Activated naive CD4-positive, alpha-beta T cell treated with anti-CD3 and anti-CD28 coated beads for 36 hours (primary cell): ENCODE measurements at regions of chr21 and their contacts with region 1.

Region 1: DNA sequence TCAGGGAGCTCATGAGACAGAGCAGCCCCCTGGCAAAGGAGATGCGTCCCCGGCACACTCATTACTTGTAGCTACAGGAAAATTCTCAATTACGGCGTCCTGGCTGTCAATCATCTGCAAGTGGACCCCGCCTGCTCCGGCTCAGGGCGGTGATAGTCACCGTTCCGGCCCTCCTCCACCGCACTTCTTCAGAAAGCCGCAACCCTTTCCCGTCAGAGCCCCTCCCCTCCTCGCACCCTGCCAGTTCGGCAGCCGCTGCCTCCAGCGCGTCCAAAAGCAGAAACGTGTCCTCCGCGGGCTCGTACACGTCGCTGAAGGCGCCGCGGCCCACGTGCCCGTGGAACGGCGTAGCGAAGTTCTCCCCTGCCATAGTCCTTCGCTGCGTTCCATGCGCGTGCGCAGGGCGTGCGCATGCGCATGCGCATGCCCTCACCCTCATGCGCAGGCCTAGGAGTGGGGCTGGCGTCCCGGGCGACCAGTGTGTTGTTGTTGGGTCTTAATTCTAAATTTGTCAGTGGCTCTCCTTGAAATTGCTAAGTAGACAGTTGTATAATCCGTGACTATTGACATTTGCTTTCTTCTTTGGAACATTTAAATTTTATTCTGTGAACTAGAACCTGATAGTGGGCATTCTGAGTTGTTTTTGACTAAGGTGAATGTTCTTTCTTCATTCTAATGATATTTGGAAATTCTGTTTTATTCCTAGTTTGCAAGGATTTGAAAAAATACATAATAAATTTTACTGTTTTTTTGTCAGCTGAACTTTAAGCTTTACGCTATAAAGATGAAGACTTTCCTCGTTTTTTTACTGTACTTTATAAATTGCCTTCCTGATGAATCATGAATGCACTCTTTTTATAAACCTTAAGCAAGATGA is 107.5 kb downstream of the LTN1 start:
- DNase-seq: peak; percentile 92
- H3K4me3 Mint-ChIP-seq: peak overlapping the region; percentile 90
- H3K27ac Mint-ChIP-seq: peak overlapping the region; percentile 97
- H3K4me1 Mint-ChIP-seq: peaks cover 7% of the 10 kb centered on the region
- H3K27me3 Mint-ChIP-seq: no peaks in the 10 kb centered on the region

Region 2: GRCh38 chr21:28636988-28637691 is 248.1 kb before region 1 on chr21:
- CTCF ChIA-PET with region 1: no interaction called
- intact Hi-C with region 1: loop called (anchors 5 kb)
- DNase-seq: peak; percentile 59
- H3K4me3 Mint-ChIP-seq: no peak overlapping the region
- H3K27ac Mint-ChIP-seq: no peak overlapping the region
- H3K4me1 Mint-ChIP-seq: peaks cover 22% of the 10 kb centered on the region
- H3K27me3 Mint-ChIP-seq: no peaks in the 10 kb centered on the region

Region 3: GRCh38 chr21:28771790-28772501 is 113.3 kb before region 1 on chr21:
- CTCF ChIA-PET with region 1: no interaction called
- intact Hi-C with region 1: loop called (anchors 1 kb)
- DNase-seq: peak; percentile 23
- H3K4me3 Mint-ChIP-seq: no peak overlapping the region
- H3K27ac Mint-ChIP-seq: no peak overlapping the region
- H3K4me1 Mint-ChIP-seq: peaks cover 52% of the 10 kb centered on the region
- H3K27me3 Mint-ChIP-seq: no peaks in the 10 kb centered on the region

Region 4: DNA sequence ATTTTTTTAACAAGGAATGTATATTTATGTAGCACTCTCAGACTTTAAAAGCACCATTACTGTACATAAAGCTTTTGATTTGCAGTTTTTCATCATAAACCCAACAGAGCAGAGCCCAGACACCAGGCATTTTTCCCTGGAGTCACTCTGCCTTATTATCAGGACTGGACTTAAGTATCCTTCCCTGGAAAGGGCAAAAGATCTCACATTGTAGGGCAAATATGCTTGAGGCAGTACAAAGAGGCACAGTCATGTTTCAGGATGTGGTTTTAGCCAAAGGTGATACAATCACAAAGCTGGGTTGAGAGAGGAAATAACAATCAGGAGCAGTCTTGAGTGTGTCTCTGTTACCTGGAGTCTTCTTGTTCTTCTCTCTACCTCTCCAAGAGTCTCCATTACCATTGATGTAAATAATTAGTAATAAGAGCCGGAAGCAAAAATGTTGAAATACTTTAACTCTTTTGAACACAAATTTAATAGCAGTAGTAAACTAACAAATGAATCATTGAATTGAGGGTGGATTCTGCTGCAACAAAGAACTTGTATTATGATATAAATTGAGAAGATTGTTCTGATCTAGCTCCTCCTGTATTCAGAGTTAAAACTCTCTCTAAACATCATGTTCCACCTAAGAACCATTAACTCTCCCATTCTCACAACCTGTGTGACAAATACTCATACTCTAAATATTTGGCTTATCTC is 53.0 kb before region 1 on chr21:
- CTCF ChIA-PET with region 1: interaction called, 3 read pairs
- intact Hi-C with region 1: loop called (anchors 1 kb)
- DNase-seq: peak; percentile 36
- H3K4me3 Mint-ChIP-seq: no peak overlapping the region
- H3K27ac Mint-ChIP-seq: no peak overlapping the region
- H3K4me1 Mint-ChIP-seq: peaks cover 57% of the 10 kb centered on the region
- H3K27me3 Mint-ChIP-seq: no peaks in the 10 kb centered on the region

Region 5: DNA sequence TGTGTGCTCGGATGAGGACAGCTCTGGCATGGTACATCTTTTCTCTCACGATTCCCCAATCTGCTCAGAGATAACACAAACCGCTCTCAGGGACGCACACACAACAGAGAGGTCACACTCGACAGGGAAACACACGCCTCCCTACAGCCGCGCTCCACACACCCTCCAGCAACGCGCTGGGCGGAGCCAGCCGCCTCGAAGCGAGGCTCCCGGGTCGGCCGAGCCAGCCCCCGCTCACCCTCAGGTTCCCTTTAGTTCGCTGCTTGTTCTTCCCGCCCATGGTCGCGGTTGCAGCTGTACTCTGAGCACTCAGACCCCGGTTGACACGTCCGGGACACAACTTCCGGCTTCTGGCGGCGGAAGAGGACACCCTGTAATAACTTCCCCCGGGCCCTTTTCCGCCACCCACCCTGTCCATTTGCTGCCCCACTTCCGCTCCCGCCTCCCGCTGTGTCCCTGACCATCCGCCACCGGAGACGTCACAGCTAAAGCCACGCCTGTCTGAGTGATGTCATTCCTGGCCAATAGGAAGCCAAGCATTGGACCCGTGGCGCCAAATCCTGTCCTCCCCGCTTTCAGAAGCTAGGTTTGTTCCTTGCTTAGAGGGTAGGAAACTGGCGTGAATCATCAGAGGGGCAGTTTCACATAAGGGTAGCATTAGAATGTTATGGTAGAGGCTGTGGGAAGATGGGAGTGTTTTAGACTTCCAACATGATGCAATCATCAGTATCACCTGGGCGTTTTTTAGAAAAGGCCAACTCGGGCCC is 107.5 kb after region 1 on chr21 and contains the start of gene LTN1:
- CTCF ChIA-PET with region 1: no interaction called
- intact Hi-C with region 1: loop called (anchors 1 kb)
- DNase-seq: peak; percentile 100
- H3K4me3 Mint-ChIP-seq: peak within 1 kb of the TSS; percentile 99
- H3K27ac Mint-ChIP-seq: peak within 1 kb of the TSS; percentile 97
- H3K4me1 Mint-ChIP-seq: peaks cover 51% of the 10 kb centered on the region
- H3K27me3 Mint-ChIP-seq: no peaks in the 10 kb centered on the region
- total RNA-seq, gene LTN1: 18.5 to 21.2 TPM

Region 6: DNA sequence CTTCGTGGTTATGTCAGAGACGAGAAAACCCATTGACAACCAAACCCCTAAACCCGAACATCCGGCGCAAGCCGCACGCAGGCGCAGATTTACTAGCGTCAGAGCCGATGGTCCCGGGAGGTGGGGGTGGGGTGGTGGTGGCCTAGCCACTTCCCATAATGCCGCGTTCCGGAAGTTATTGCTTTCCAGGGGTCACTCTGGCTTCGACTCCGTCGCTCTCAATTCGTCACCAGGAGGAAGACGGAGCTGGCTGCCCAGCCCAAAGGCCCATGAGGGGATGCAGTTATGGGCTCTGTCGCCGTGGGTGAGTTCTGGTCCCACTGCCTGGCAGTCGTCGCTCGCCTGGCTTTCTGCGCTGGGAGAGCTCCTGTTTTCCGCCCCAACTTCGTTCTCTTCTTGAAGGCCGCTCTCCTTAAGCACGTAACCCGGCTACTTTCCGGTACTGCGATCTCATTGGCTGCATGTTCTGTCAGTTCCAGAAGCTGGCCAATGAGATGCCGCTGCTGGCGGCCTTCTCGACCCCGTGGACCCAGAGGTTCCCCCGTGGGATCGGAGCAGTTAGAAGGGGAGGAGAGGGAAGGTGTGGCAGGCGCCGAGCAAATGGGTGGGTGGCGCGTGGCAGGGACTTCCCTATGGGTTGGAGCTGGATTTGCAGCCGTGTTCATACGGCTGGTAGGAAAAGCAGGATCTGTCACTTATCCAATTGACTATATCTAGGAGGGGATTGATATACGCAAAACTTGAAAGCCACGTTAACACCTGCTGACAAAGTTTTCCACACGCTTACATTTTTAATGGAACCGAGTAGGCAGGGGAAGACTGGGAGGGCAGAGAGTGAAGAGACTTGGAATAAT is 139.5 kb after region 1 on chr21 and contains the start of gene USP16:
- CTCF ChIA-PET with region 1: no interaction called
- intact Hi-C with region 1: loop called (anchors 1 kb)
- DNase-seq: peak; percentile 95
- H3K4me3 Mint-ChIP-seq: peak within 1 kb of the TSS; percentile 88
- H3K27ac Mint-ChIP-seq: peak within 1 kb of the TSS; percentile 98
- H3K4me1 Mint-ChIP-seq: peaks cover 42% of the 10 kb centered on the region
- H3K27me3 Mint-ChIP-seq: no peaks in the 10 kb centered on the region
- total RNA-seq, gene USP16: 36.1 to 36.7 TPM

Region 7: DNA sequence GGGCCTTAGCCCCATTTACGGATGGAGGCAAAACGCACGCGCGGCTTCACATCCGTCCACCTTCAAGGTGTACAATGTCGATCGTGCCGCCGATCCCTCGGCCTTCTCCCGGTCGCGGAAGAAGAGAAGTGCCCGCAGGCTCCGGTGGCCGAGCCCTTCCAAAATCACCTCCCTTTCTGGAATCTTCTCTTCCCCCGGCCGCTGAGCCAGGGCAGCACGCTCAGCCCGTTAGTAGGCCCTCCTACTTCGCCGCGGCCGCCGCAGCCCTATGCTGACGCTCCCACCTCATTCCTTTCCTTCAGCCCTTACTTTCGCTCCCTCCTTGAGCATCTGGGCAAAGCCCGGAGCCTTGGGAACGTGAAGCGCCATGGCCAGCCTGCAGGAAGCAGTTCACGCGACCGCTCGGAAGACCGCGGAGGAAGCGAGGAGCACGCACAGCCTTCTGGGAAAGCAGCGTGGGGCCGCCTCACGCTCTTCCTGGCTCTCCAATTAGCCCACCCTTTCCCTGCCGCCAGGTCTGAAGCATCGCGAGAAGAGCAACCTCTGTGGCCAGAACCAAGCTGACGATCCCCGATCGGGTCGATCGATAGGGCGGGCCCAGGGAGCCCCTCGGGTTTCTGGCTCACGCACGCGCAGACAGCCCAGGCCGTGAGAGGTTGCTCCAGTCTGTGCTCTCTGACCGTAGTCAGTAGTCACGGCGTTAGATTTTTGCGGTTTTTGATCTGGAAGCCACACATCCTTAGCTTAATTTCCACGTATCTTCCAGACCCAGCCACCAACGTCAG is 188.2 kb after region 1 on chr21 and contains the start of gene CCT8:
- CTCF ChIA-PET with region 1: no interaction called
- intact Hi-C with region 1: loop called (anchors 1 kb)
- DNase-seq: peak; percentile 99
- H3K4me3 Mint-ChIP-seq: peak within 1 kb of the TSS; percentile 94
- H3K27ac Mint-ChIP-seq: peak within 1 kb of the TSS; percentile 95
- H3K4me1 Mint-ChIP-seq: peaks cover 46% of the 10 kb centered on the region
- H3K27me3 Mint-ChIP-seq: no peaks in the 10 kb centered on the region
- total RNA-seq, gene CCT8: 482 to 515 TPM